CD4-positive, alpha-beta memory T cell (primary cell): ENCODE measurements at regions of chr11 and their contacts with region 1.

Region 1: DNA sequence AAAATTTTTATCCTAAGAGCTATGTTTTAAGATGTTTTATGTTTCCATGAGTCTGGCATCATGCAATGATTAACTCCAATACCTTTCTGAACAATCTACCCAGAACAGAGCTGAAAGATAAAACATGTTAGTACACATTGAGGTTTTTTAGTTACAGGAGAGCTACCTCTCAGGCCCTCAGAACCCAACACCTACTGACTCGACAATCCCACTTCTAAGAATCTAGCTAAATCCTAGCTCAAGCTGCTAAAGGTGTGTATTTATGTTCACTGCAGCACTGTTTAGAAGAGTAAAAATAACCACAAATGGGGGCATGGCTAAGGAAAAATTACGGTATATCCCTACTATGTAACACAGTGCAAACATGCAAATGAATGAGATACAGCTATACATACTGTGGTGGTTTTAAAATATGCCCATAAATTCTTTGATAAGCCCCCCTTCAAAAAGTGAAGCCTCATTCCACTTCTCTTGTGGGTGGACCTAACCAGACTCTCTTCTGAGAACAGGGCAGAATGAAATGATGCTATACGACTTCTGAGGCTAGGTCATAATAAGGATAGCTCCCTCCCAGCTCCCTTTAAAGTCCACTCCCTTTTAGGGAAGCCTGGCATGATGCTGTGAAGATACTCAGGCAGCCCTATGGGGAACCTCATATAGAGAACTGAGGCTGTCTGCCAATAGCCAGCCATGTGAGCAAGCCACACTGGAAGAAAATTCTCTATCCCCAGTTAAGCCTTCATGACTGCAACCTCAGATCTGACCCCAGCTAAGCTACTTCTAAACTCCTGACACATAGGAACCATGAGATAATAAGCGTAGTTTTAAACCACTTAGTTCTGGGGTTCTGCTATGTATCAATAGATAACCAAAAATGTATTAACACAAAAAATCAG is 29.5 kb downstream of the TMEM123 start:
- DNase-seq: no peak
- H3K4me3 ChIP-seq: no peak overlapping the region
- H3K4me3 Mint-ChIP-seq: peak overlapping the region in 7 of 8 donors; percentile 1 to 75 (median 24)
- H3K27ac ChIP-seq: no peak overlapping the region
- H3K27ac Mint-ChIP-seq: peak overlapping the region; percentile 52 to 88 (median 75)
- H3K4me1 ChIP-seq: peaks cover 90% of the 10 kb centered on the region
- H3K4me1 Mint-ChIP-seq: peaks cover 73 to 93% (median 82%) of the 10 kb centered on the region in 4 donors
- H3K27me3 ChIP-seq: no peaks in the 10 kb centered on the region
- H3K27me3 Mint-ChIP-seq: no peaks in the 10 kb centered on the region

Region 2: GRCh38 chr11:102197670-102198139 is 225.4 kb before region 1 on chr11:
- CTCF ChIA-PET with region 1: no interaction called
- POLR2A ChIA-PET with region 1: no interaction called
- intact Hi-C with region 1: no loop called
- DNase-seq: no peak
- H3K4me3 ChIP-seq: no peak overlapping the region
- H3K4me3 Mint-ChIP-seq: no peak overlapping the region
- H3K27ac ChIP-seq: no peak overlapping the region
- H3K27ac Mint-ChIP-seq: no peak overlapping the region
- H3K4me1 ChIP-seq: no peaks in the 10 kb centered on the region
- H3K4me1 Mint-ChIP-seq: no peaks in the 10 kb centered on the region
- H3K27me3 ChIP-seq: no peaks in the 10 kb centered on the region
- H3K27me3 Mint-ChIP-seq: peaks cover 7 to 23% of the 10 kb centered on the region in 2 donors

Region 3: DNA sequence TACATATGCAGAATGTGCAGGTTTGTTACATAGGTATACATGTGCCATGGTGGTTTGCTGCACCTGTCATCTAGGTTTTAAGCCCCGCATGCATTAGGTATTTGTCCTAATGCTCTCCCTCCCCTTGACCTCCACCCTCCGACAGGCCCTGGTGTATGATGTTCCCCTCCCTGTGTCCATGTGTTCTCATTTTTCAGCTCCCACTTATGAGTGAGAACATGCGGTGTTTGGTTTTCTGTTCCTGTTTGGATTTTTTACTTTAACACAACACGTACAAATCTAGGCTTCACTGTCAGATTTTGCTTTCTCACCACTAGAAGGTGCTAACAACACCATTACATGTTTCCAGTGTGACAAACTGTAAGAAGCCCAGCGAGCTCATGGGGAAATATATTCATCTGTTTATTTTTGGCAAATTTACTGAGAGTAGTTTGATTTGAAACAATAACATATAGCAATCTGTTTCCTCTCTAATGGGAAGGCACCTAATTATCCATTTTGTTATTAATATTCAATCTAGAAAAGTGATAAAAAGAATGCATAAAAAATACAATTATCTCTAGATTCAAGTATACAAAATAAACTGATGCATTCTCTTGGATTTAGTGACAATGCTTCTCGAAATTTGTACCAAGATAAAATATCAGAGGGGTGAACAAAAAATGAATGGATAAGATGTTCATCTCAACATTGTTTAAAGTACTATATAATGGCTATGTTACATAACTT is 129.0 kb before region 1 on chr11:
- CTCF ChIA-PET with region 1: no interaction called
- POLR2A ChIA-PET with region 1: no interaction called
- intact Hi-C with region 1: no loop called
- DNase-seq: peak; percentile 57 to 74 (median 71)
- H3K4me3 ChIP-seq: peak overlapping the region in 1 of 2 donors; percentile 52
- H3K4me3 Mint-ChIP-seq: peak overlapping the region; percentile 86 to 99 (median 96)
- H3K27ac ChIP-seq: peak overlapping the region; percentile 62
- H3K27ac Mint-ChIP-seq: peak overlapping the region; percentile 78 to 99 (median 97)
- H3K4me1 ChIP-seq: peaks cover 34% of the 10 kb centered on the region
- H3K4me1 Mint-ChIP-seq: peaks cover 20 to 58% (median 36%) of the 10 kb centered on the region in 4 donors
- H3K27me3 ChIP-seq: no peaks in the 10 kb centered on the region
- H3K27me3 Mint-ChIP-seq: no peaks in the 10 kb centered on the region

Region 4: DNA sequence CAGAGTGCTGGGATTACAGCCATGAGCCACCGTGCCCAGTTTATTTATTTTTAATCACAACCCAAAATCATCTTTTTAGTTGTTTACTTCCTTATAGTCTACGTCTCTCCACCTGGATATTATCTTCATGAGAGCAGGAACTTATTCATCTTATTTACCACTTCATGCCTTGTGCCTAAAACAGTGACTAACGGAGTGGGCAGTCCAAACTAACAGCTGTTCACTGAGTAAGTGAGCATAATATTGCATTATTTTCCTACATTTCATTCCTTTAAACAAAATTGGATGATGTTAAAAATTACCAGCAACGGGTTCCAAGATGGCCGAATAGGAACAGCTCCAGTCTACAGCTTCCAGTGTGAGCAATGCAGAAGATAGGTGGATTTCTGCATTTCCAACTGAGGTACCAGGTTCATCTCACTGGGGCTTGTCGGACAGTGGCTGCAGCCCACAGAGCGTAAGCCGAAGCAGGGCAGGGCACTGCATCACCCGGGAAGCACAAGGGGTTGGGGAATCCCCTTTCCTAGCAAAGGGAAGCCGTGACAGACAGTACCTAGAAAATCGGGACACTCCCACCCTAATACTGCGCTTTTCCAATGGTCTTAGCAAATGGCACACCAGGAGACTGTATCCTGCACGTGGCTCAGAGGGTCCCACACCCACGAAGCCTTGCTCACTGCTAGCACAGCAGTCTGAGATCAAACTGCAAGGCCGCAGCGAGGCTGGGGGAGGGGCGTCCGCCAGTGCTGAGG is 15.4 kb after region 1 on chr11:
- CTCF ChIA-PET with region 1: interaction called, 7 read pairs
- POLR2A ChIA-PET with region 1: interaction called, 8 read pairs
- intact Hi-C with region 1: loop called (anchors 2 kb)
- DNase-seq: no peak
- H3K4me3 ChIP-seq: no peak overlapping the region
- H3K4me3 Mint-ChIP-seq: peak overlapping the region; percentile 29 to 84 (median 59)
- H3K27ac ChIP-seq: peak overlapping the region; percentile 15
- H3K27ac Mint-ChIP-seq: peak overlapping the region; percentile 36 to 89 (median 75)
- H3K4me1 ChIP-seq: peaks cover 57% of the 10 kb centered on the region
- H3K4me1 Mint-ChIP-seq: peaks cover 58 to 88% (median 76%) of the 10 kb centered on the region in 4 donors
- H3K27me3 ChIP-seq: no peaks in the 10 kb centered on the region
- H3K27me3 Mint-ChIP-seq: no peaks in the 10 kb centered on the region